Caco-2 (cell line): ENCODE measurements at regions of chr2 and their contacts with region 1.

Region 1: GRCh38 chr2:97697252-97698235 is 15.8 kb upstream of the ZAP70 start:
- DNase-seq: peak; percentile 86 to 91
- H3K4me3 ChIP-seq: no peak overlapping the region
- H3K4me3 Mint-ChIP-seq: no peak overlapping the region
- H3K27ac Mint-ChIP-seq: no peak overlapping the region
- H3K4me1 ChIP-seq: peaks cover 18% of the 10 kb centered on the region
- H3K4me1 Mint-ChIP-seq: peaks cover 8% of the 10 kb centered on the region
- H3K27me3 ChIP-seq: no peaks in the 10 kb centered on the region
- H3K27me3 Mint-ChIP-seq: no peaks in the 10 kb centered on the region
- CTCF ChIP-seq: peak; percentile 92 to 94

Region 2: DNA sequence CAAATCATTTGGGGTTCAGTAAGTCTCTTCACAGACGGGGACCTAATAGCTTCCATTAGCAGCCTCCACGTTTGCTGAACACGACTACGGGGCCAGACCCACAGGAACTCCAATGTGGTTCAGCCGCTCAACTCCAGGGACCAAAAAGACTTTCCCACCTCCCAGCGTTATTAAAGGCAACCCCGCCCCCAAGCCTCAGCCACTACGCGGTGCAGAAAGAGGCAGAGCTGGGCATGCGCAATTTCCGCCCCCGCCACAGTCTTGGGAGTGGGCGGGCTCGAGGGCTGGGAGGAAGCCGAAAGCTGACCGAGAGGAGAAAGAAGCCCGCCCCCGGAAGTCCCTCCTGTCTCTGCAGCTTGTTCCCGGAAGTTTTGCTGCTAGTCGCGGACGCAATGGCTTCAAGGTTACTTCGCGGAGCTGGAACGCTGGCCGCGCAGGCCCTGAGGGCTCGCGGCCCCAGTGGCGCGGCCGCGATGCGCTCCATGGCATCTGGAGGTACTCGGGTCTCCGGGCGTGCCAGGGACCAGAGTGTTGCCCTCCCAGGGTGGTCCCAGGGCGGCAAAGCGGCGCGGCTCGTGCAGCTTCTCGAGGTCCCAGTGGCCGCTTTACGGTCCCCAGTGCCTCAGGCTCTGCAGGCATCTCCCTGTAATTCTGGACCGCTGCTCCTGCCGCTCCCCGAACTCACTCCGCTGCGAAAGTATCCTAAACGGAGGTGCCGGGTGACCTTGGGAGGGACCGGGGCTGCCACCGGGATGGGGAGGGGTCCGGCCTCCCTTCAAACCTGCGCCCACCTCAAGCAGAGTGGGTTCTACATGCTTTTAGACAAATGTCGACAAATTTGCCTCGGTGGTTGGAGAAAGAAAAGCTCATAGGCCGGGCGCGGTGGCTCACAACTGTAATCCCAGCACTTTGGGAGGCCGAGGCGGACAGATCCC is 51.6 kb before region 1 on chr2 and contains the start of gene COX5B:
- CTCF ChIA-PET with region 1: interaction called, 11 read pairs
- POLR2A ChIA-PET with region 1: interaction called, 3 read pairs
- intact Hi-C with region 1: loop called (anchors 1 kb)
- DNase-seq: peak; percentile 98 to 99
- H3K4me3 ChIP-seq: peak within 1 kb of the TSS; percentile 88
- H3K4me3 Mint-ChIP-seq: peak within 1 kb of the TSS; percentile 99
- H3K27ac Mint-ChIP-seq: peak within 1 kb of the TSS; percentile 99
- H3K4me1 ChIP-seq: no peaks in the 10 kb centered on the region
- H3K4me1 Mint-ChIP-seq: peaks cover 6% of the 10 kb centered on the region
- H3K27me3 ChIP-seq: no peaks in the 10 kb centered on the region
- H3K27me3 Mint-ChIP-seq: peaks cover 3% of the 10 kb centered on the region
- CTCF ChIP-seq: no peak
- total RNA-seq, gene COX5B: 313 TPM in 2 replicates

Region 3: DNA sequence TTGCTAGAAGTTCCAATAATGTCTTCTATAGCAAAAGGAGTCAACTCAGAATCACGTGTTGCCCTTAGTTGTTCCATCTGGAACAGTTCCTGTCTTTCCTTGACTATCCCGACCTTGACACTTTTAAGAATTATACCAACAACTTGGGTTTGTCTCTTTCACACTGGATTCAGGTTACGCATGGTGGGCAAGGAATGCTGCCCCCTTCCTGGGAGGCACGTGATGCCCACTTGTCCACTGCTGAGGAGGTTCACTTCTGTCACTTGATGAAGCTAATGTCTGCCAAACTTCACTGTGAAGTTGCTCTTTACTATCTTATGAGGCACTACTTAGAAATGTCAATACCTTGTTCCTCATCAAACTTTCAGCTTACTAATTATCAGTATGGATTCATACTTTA is 46.4 kb before region 1 on chr2:
- CTCF ChIA-PET with region 1: interaction called, 11 read pairs
- POLR2A ChIA-PET with region 1: no interaction called
- intact Hi-C with region 1: loop called (anchors 1 kb)
- DNase-seq: no peak
- H3K4me3 ChIP-seq: no peak overlapping the region
- H3K4me3 Mint-ChIP-seq: no peak overlapping the region
- H3K27ac Mint-ChIP-seq: no peak overlapping the region
- H3K4me1 ChIP-seq: no peaks in the 10 kb centered on the region
- H3K4me1 Mint-ChIP-seq: peaks cover 6% of the 10 kb centered on the region
- H3K27me3 ChIP-seq: no peaks in the 10 kb centered on the region
- H3K27me3 Mint-ChIP-seq: no peaks in the 10 kb centered on the region
- CTCF ChIP-seq: no peak

Region 4: GRCh38 chr2:97663965-97664635 is 33.4 kb before region 1 on chr2 and contains the start of gene ACTR1B:
- CTCF ChIA-PET with region 1: interaction called, 42 read pairs
- POLR2A ChIA-PET with region 1: interaction called, 3 read pairs
- intact Hi-C with region 1: loop called (anchors 1 kb)
- DNase-seq: peak; percentile 99
- H3K4me3 ChIP-seq: peak within 1 kb of the TSS; percentile 73
- H3K4me3 Mint-ChIP-seq: peak within 1 kb of the TSS; percentile 94
- H3K27ac Mint-ChIP-seq: peak within 1 kb of the TSS; percentile 98
- H3K4me1 ChIP-seq: peaks cover 6% of the 10 kb centered on the region
- H3K4me1 Mint-ChIP-seq: peaks cover 11% of the 10 kb centered on the region
- H3K27me3 ChIP-seq: no peaks in the 10 kb centered on the region
- H3K27me3 Mint-ChIP-seq: no peaks in the 10 kb centered on the region
- CTCF ChIP-seq: peak; percentile 65 to 75
- total RNA-seq, gene ACTR1B: 41.1 and 42.3 TPM in 2 replicates

Region 5: GRCh38 chr2:97747716-97748115 is 50.2 kb after region 1 on chr2:
- CTCF ChIA-PET with region 1: interaction called, 19 read pairs
- POLR2A ChIA-PET with region 1: no interaction called
- intact Hi-C with region 1: loop called (anchors 1 kb)
- DNase-seq: no peak
- H3K4me3 ChIP-seq: no peak overlapping the region
- H3K4me3 Mint-ChIP-seq: no peak overlapping the region
- H3K27ac Mint-ChIP-seq: no peak overlapping the region
- H3K4me1 ChIP-seq: no peaks in the 10 kb centered on the region
- H3K4me1 Mint-ChIP-seq: peaks cover 6% of the 10 kb centered on the region
- H3K27me3 ChIP-seq: no peaks in the 10 kb centered on the region
- H3K27me3 Mint-ChIP-seq: no peaks in the 10 kb centered on the region
- CTCF ChIP-seq: no peak

Region 6: GRCh38 chr2:97992836-97993825 is 295.6 kb after region 1 on chr2:
- CTCF ChIA-PET with region 1: no interaction called
- POLR2A ChIA-PET with region 1: no interaction called
- intact Hi-C with region 1: no loop called
- DNase-seq: no peak
- H3K4me3 ChIP-seq: no peak overlapping the region
- H3K4me3 Mint-ChIP-seq: peak overlapping the region; percentile 92
- H3K27ac Mint-ChIP-seq: no peak overlapping the region
- H3K4me1 ChIP-seq: peaks cover 20% of the 10 kb centered on the region
- H3K4me1 Mint-ChIP-seq: peaks cover 16% of the 10 kb centered on the region
- H3K27me3 ChIP-seq: no peaks in the 10 kb centered on the region
- H3K27me3 Mint-ChIP-seq: no peaks in the 10 kb centered on the region
- CTCF ChIP-seq: no peak

Region 7: DNA sequence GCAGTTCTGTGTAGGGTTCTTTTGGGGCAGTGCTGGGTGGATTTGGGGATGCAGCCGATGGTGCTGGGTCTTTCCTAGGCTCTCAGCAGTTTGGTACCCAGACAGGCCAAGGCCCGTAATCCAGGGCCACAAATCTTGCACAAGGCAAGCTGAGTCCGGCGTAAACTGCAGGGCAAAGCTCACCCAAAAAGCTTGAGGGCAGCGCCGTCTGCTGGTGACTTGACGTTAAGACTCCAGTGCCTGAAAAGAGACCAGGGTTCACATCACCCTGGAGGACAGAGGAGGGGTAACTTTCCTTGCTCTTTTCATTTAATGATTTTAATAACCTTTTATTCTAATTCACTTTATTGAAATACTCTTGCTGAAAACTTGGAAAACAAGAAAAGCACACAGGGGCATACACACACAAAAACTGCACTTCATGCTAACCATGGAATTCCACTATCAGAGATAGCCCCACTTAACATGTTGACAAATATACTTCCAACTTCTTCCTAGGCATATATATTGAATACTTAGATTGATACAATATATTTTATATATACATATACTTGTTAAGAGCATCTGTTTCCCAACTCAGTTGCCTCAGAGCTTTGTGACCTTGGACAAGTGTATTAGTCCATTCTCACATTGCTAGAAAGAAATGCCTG is 687.6 kb after region 1 on chr2:
- CTCF ChIA-PET with region 1: interaction called, 13 read pairs
- POLR2A ChIA-PET with region 1: no interaction called
- intact Hi-C with region 1: loop called (anchors 1 kb)
- DNase-seq: peak; percentile 71 to 84
- H3K4me3 ChIP-seq: no peak overlapping the region
- H3K4me3 Mint-ChIP-seq: no peak overlapping the region
- H3K27ac Mint-ChIP-seq: no peak overlapping the region
- H3K4me1 ChIP-seq: no peaks in the 10 kb centered on the region
- H3K4me1 Mint-ChIP-seq: no peaks in the 10 kb centered on the region
- H3K27me3 ChIP-seq: no peaks in the 10 kb centered on the region; the same call in 1 of the 2 replicates
- H3K27me3 Mint-ChIP-seq: peaks cover 5% of the 10 kb centered on the region
- CTCF ChIP-seq: peak; percentile 93 to 97